ENCODE measurements at regions of chr19 and their contacts with region 1.

Region 1: DNA sequence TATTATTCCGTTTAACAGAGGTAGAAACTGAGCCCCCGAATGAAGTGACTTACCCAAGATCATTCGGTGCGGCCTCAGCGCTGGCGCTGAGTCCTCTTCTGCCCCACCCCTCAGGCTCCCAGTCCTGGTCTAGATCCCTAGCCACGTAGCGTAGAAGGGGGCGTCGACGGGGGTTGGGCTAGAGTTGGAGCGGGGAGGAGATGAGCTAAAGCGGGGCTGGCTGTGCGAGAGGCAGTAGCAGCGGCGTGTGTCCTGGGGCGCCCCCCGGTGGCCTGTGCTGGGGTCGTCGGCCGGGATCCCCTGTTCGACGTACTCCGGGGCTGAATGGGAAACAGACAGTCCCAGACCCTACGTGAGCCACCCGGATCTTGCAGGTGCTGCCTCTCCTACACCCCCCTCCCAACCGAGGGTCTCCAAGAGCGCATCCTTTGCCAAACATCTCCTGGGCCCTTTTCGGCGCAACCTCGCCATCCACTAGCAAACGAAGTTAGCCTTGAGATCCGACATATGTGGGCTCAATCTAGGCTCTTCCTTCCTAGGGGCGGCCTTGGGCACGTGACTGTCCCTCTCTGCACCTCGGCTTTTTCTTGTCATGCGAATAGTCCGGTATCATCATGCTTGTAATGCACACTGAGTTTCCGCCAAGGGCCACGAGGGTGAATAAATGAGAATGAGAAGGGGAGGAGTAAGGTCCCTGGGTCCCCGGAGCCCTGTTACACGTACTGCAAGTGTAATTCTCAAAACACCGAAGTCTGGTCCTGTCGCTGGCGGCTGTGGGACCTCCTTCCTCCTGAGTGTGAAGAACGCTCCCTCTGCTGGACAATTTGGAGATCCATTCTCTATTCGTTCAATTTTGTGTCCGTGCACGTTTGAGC is 47.7 kb downstream of the CYP4F22 start:
- DNase-seq: peak; percentile 94 to 95 (median 94)
- ATAC-seq: peak; percentile 96 to 97 (median 96)
- H3K4me3 ChIP-seq: peak overlapping the region; percentile 13 to 22 (median 22)
- H3K27ac ChIP-seq: peak overlapping the region in 2 of 3 donors; percentile 19 to 26
- H3K4me1 ChIP-seq: peaks cover 0 to 10% (median 2%) of the 10 kb centered on the region in 4 donors
- H3K27me3 ChIP-seq: no peaks in the 10 kb centered on the region
- CTCF ChIP-seq: peak; percentile 68 to 89 (median 76)
- POLR2A ChIP-seq: peak; percentile 50

Region 2: DNA sequence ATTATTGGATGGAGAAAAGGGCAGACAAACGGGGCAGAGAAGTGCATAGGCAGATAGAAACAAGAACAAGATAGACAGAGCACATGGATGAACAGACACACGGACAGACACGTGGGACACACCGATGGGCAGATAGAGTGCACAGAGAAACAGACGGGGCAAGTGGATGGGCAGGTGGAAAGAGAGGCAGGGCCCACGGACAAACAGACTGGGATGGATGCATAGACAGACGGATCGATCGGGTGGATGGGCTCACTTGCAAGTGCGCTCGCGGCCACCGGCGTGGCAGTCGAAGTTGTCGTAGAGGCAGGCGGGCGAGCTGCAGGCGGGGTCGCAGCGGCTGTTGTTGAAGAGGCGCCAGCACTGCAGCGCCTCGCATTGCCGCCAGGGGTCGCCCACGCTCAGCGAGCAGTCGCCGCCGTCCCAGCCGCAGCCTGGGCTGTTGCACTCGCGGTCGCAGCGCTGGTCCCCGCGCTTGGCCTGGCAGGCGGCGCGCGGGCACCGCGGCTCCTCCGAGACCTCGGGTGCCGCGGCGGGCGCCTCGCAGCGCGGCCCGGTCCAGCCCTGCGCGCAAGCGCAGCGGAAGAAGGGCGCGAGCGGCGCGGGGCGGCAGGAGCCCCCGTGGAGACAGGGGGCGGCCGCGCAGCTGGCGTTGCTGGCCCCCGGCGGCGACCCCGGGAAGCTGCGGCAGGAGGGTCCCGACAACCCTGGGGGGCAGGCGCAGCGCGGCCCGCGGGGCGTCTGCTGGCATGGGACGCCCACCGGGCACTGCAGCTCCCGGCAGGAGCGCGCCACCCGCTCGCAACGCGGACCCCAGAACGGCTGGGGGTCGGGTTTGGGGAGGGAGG is 378.5 kb before region 1 on chr19:
- intact Hi-C with region 1: loop called in 1 of 2 experiments (anchors 10 kb)
- DNase-seq: peak; percentile 82 to 85 (median 83)
- ATAC-seq: peak; percentile 90 to 98 (median 94)
- H3K4me3 ChIP-seq: peak overlapping the region in 1 of 3 donors; percentile 40
- H3K27ac ChIP-seq: no peak overlapping the region
- H3K4me1 ChIP-seq: peaks cover 0 to 3% (median 0%) of the 10 kb centered on the region in 4 donors
- H3K27me3 ChIP-seq: no peaks in the 10 kb centered on the region
- CTCF ChIP-seq: peak; percentile 96 to 99 (median 98)
- POLR2A ChIP-seq: no peak

Region 3: GRCh38 chr19:15248648-15249527 is 307.1 kb before region 1 on chr19:
- intact Hi-C with region 1: loop called in 1 of 2 experiments (anchors 10 kb)
- DNase-seq: peak; percentile 71 to 82 (median 74)
- ATAC-seq: peak; percentile 69 to 81 (median 77)
- H3K4me3 ChIP-seq: no peak overlapping the region
- H3K27ac ChIP-seq: peak overlapping the region; percentile 52 to 67 (median 60)
- H3K4me1 ChIP-seq: peaks cover 0 to 34% (median 20%) of the 10 kb centered on the region in 4 donors
- H3K27me3 ChIP-seq: no peaks in the 10 kb centered on the region
- CTCF ChIP-seq: no peak
- POLR2A ChIP-seq: no peak

Region 4: DNA sequence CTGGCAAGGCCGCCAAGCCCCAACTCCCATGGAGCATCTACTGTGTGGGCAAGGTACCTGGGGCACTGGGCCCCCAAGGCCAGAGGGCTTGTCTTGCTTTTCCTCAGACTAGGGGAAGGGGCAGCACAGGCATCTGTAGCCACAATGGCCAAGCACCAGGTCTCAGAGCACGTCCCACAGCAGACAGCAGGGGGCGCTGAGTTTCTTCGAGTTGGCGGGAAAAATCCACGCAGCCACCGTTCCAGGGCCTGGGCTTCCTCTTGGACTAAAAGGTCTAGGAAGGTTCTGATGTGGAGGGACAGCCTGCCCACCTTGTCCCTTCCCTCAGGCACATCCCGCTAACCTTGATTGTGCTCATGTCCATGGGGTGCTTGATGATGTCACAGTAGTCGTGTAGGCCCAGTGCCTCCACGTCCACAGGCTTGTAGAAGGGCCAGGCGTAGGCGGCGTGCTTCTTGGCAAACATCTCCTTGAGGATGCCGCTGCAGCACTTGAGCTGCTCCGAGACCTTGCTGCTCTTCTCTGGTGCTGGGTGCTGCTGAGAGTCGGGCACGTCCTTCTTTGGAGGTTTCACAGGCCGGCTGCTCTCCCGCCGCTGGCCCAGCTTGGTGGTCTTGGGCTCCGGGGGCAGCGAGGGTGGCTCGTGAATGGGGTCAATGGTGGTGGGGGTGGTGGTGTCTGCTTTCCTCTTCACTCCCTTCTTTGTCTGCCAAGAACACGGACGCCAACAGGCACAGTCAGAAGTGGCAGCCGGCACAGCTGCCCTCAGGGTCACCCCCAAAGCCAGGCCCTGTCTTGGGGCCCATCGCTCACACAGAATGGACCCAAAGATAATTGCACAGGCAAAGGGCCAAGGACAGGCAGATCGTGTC is 291.7 kb before region 1 on chr19:
- intact Hi-C with region 1: loop called in 1 of 2 experiments (anchors 5 kb)
- DNase-seq: peak; percentile 70 to 72 (median 72)
- ATAC-seq: peak; percentile 23 to 60 (median 48)
- H3K4me3 ChIP-seq: no peak overlapping the region
- H3K27ac ChIP-seq: peak overlapping the region in 1 of 3 donors; percentile 57
- H3K4me1 ChIP-seq: peaks cover 2 to 38% (median 22%) of the 10 kb centered on the region in 4 donors
- H3K27me3 ChIP-seq: no peaks in the 10 kb centered on the region
- CTCF ChIP-seq: peak; percentile 62 to 82 (median 72)
- POLR2A ChIP-seq: no peak

Region 5: DNA sequence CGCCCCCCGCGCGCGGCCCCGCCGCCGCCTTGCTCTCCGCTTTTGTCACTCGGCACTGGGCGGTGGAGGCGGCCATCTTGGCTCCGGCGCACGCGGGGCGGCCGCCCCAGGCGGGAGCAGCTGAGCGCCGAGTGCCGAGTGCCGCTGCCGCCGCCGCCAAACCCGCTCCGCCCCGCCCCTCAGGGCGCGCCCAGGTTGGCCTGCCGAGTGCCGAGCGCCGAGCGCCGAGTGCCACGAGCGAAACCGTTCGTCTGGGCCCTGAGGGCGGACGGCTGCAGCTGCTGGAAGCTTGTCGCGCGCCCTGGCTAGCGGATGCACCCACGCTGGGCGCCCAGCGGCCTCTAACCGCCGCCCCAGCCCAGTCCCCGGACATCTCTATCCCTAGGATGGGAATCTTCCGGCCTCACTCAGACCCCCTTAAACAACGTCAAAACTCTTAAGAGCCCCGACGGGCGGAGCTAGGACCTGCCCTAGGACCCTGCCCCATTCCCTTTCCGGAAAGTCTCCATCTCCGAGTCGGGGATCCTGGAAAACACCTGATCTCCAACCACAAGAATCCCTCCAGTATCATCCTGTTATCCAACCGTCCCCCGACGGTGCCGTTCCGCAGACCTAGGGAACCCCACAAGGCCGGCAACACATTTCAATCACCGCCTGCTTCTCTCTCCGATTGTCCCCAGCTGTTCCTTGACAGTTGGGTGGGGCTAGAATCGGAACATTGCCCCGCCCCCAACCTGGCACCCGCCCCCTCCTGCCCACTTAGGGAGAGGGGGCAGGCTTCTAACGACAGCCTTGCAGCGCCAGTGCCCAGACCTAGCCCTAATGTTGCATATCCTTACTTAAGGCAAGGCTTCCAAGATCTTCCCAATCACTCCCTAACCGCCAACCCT is 123.1 kb before region 1 on chr19:
- intact Hi-C with region 1: no loop called
- DNase-seq: peak; percentile 93 to 95 (median 94)
- ATAC-seq: peak; percentile 92 to 98 (median 93)
- H3K4me3 ChIP-seq: peak overlapping the region; percentile 45 to 75 (median 66)
- H3K27ac ChIP-seq: peak overlapping the region; percentile 45 to 82 (median 65)
- H3K4me1 ChIP-seq: peaks cover 0 to 24% (median 10%) of the 10 kb centered on the region in 4 donors
- H3K27me3 ChIP-seq: no peaks in the 10 kb centered on the region
- CTCF ChIP-seq: no peak
- POLR2A ChIP-seq: peak; percentile 44

Region 6: GRCh38 chr19:15449620-15450527 is 106.1 kb before region 1 on chr19 and contains the start of gene WIZ:
- intact Hi-C with region 1: loop called in 1 of 2 experiments (anchors 10 kb)
- DNase-seq: peak; percentile 80 to 83 (median 80)
- ATAC-seq: peak in 3 of 4 donors; percentile 4 to 30 (median 5)
- H3K4me3 ChIP-seq: peak within 1 kb of the TSS; percentile 40 to 56 (median 48)
- H3K27ac ChIP-seq: peak within 1 kb of the TSS in 1 of 3 donors; percentile 68
- H3K4me1 ChIP-seq: peaks cover 0 to 30% (median 6%) of the 10 kb centered on the region in 4 donors
- H3K27me3 ChIP-seq: no peaks in the 10 kb centered on the region
- CTCF ChIP-seq: no peak
- POLR2A ChIP-seq: no peak
- total RNA-seq, gene WIZ: 12.5 to 24.4 (median 14.6) TPM